Common myeloid progenitor, CD34-positive (primary cell): ENCODE measurements at regions of chr4 and their contacts with region 1.

Region 1: GRCh38 chr4:123621072-123621705 is 224.6 kb downstream of the SPRY1 start:
- DNase-seq: peak; percentile 67 to 71 (median 68)
- H3K4me3 ChIP-seq: peak overlapping the region in 4 of 7 experiments; percentile 5 to 65 (median 17)
- H3K27ac ChIP-seq: no peak overlapping the region
- H3K4me1 ChIP-seq: peaks cover 7 to 62% (median 50%) of the 10 kb centered on the region in 4 experiments
- H3K27me3 ChIP-seq: no peaks in the 10 kb centered on the region

Region 2: GRCh38 chr4:123609829-123610228 is 11.4 kb before region 1 on chr4:
- CTCF ChIA-PET with region 1: interaction called, 14 read pairs
- POLR2A ChIA-PET with region 1: no interaction called
- DNase-seq: no peak
- H3K4me3 ChIP-seq: no peak overlapping the region
- H3K27ac ChIP-seq: no peak overlapping the region
- H3K4me1 ChIP-seq: peaks cover 5 to 23% (median 12%) of the 10 kb centered on the region in 4 experiments
- H3K27me3 ChIP-seq: no peaks in the 10 kb centered on the region

Region 3: DNA sequence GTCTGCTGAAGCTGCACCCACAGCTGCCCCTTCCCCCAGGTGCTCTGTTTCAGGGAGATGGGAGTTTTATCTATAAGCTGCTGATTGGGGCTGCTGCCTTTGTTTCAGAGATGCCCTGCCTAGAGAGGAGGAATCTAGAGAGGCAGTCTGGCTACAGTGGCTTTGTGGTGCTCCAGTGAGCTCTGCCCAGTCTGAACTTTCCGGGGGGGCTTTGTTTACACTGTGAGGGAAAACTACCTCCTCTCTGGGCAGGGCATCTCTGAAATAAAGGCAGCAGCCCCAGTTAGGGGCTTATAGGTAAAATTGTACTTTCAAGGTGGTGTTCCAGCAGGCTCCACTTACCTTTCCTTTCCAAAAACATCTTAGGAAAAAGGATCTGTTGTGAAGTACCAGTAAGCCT is 17.6 kb after region 1 on chr4:
- CTCF ChIA-PET with region 1: no interaction called
- POLR2A ChIA-PET with region 1: no interaction called
- DNase-seq: no peak
- H3K4me3 ChIP-seq: no peak overlapping the region
- H3K27ac ChIP-seq: no peak overlapping the region
- H3K4me1 ChIP-seq: no peaks in the 10 kb centered on the region
- H3K27me3 ChIP-seq: no peaks in the 10 kb centered on the region